SK-N-SH (cell line): ENCODE measurements at regions of chr1 and their contacts with region 1.

Region 1: DNA sequence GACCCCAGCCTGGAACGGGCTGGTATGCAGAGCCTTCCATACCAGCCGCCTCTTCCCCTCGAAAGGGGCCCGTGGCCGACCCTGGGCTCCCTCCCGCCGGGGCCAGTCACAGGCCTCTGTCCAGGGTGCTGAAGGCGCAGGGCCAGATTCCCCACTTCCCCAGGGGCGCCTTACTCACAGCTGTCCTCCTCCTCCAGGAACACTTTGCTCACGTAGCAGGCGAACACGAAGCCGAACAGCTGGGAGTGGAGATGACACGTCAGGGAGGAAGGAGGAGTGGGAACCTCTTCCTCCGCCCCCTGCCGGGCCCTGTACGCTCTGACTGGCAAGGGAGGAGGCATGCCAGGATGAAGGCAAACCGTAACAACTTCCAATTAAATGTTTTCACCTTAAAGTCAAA is 57.3 kb downstream of the NKAIN1 start:
- DNase-seq: peak; percentile 39
- H3K4me3 ChIP-seq: no peak overlapping the region
- H3K27ac ChIP-seq: no peak overlapping the region
- H3K4me1 ChIP-seq: no peaks in the 10 kb centered on the region; a peak in 1 of 4 replicates
- H3K27me3 ChIP-seq: no peaks in the 10 kb centered on the region
- CTCF ChIP-seq: no peak
- EP300 ChIP-seq: no peak
- RAD21 ChIP-seq: no peak

Region 2: DNA sequence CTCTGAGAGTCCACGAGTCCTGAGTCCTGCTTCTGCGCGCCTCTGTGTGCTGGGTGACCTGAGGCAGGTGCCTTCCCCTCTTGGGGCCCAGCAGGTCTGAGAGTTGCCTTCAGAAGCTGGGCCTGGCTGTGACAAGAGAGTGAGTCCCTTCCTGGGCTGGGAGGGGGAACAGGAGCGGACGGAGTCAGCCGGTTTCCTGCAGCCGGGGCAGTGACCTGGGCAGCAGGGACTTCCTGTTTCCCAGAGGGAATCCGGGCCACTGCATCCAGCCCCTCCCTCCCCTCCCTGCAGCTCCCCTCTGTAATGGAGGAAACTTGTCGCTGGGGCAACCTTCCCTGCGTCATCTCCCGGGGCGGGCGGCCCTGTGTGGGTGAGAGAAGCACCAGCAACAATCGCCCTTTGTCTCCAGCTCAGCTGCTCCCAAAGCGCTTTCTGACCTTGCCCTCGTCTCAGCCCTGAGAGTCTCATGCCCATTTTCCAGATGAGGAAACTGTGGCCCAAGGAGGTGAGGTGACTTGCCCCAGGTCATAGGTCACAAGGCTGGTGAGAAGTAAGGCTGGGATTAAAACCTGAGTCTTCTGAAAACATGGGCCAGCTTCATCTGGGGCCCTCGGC is 334.9 kb before region 1 on chr1:
- CTCF ChIA-PET with region 1: no interaction called
- POLR2A ChIA-PET with region 1: no interaction called
- DNase-seq: no peak
- H3K4me3 ChIP-seq: no peak overlapping the region
- H3K27ac ChIP-seq: no peak overlapping the region
- H3K4me1 ChIP-seq: peaks cover 0 to 3% of the 10 kb centered on the region in 2 experiments; a peak in 1 of 4 replicates
- H3K27me3 ChIP-seq: no peaks in the 10 kb centered on the region
- CTCF ChIP-seq: no peak
- EP300 ChIP-seq: no peak
- RAD21 ChIP-seq: no peak

Region 3: GRCh38 chr1:31216016-31216415 is 33.7 kb after region 1 on chr1:
- CTCF ChIA-PET with region 1: interaction called, 211 read pairs
- POLR2A ChIA-PET with region 1: no interaction called
- DNase-seq: peak; percentile 84
- H3K4me3 ChIP-seq: no peak overlapping the region
- H3K27ac ChIP-seq: peak overlapping the region in 1 of 2 experiments; percentile 82; a peak in 2 of 4 replicates
- H3K4me1 ChIP-seq: peaks cover 0 to 36% of the 10 kb centered on the region in 2 experiments; a peak in 2 of 4 replicates
- H3K27me3 ChIP-seq: no peaks in the 10 kb centered on the region
- CTCF ChIP-seq: no peak
- EP300 ChIP-seq: peak in 1 of 2 experiments; percentile 13; a peak in 1 of 4 replicates
- RAD21 ChIP-seq: no peak

Region 4: DNA sequence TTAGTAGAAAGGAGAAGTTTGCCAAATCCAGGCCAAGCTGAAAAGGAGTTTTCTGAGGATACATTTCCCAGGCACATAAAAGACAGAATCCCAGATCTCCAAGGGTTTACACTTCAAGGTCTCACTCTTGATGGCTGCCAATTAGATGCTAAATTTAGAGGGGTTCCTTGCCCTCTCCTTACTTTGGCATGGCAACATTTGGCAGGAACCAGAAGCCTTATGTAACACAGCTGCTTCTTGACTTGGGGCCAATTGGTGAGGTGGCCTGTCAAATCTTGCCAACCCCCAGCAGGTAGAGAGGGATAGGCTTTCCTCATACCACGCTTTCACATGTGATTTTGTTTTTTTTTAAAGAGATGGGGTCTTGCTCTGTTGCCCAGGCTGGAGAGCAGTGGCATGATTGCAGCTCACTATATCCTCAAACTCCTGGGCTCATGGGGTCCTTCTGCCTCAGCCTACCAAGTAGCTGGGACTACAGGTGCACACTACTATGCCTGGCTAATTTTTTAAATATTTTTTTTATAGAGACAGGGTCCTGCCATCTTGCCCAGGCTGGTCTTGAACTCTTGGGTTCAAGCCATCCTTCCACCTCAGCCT is 82.5 kb after region 1 on chr1:
- CTCF ChIA-PET with region 1: interaction called, 28 read pairs
- POLR2A ChIA-PET with region 1: no interaction called
- DNase-seq: no peak
- H3K4me3 ChIP-seq: no peak overlapping the region
- H3K27ac ChIP-seq: no peak overlapping the region
- H3K4me1 ChIP-seq: no peaks in the 10 kb centered on the region
- H3K27me3 ChIP-seq: no peaks in the 10 kb centered on the region
- CTCF ChIP-seq: no peak
- EP300 ChIP-seq: no peak
- RAD21 ChIP-seq: no peak

Region 5: GRCh38 chr1:31302709-31303441 is 120.5 kb after region 1 on chr1:
- CTCF ChIA-PET with region 1: interaction called, 30 read pairs
- POLR2A ChIA-PET with region 1: no interaction called
- DNase-seq: no peak
- H3K4me3 ChIP-seq: no peak overlapping the region
- H3K27ac ChIP-seq: no peak overlapping the region
- H3K4me1 ChIP-seq: peaks cover 2 to 8% of the 10 kb centered on the region in 2 experiments; a peak in 2 of 4 replicates
- H3K27me3 ChIP-seq: no peaks in the 10 kb centered on the region
- CTCF ChIP-seq: no peak
- EP300 ChIP-seq: no peak
- RAD21 ChIP-seq: no peak

Region 6: DNA sequence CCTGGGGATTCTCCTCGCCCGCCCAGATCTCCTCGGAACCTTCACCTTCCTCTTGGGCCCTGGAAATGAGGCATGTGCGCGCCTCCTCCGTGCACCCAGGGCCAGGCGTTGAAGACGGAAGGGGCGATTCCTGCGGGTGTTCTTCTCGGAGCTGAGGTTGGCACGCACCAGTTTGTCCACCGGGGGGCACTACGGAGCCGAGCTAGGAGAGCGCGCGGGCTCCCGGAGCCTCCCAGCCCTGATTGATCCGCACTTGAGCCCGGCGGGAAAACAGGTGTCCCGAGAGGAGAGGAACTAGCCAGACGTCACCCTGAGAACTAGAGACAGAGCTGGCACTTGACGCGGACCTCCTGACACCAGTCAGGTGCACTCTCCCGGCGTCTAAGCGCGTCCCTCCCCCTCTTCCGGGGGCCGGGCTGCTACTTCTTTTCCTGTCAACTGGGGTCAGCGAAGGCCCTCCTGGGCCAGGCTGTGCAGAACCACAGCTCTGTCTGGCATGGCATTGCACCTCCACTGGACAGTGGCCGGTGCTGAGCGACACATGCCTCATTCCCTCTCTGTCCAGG is 212.4 kb after region 1 on chr1:
- CTCF ChIA-PET with region 1: interaction called, 43 read pairs
- POLR2A ChIA-PET with region 1: no interaction called
- DNase-seq: peak; percentile 88
- H3K4me3 ChIP-seq: peak overlapping the region; percentile 41 to 58; a peak in 3 of 4 replicates
- H3K27ac ChIP-seq: no peak overlapping the region
- H3K4me1 ChIP-seq: peaks cover 3 to 12% of the 10 kb centered on the region in 2 experiments; a peak in 2 of 4 replicates
- H3K27me3 ChIP-seq: no peaks in the 10 kb centered on the region
- CTCF ChIP-seq: peak; percentile 86
- EP300 ChIP-seq: no peak
- RAD21 ChIP-seq: peak; percentile 79